Activated T-helper 2 cell treated with anti-CD3 and anti-CD28 coated beads, Interferon-gamma antibody, Interleukin-2, Interleukin-4, amounts not matched to agents 10 μg/mL and 5 μg/mL and 100 μg/mL, durations not matched to agents 14 hours and 24 hours and 36 hours (primary cell): ENCODE measurements at regions of chr11 and their contacts with region 1.

Region 1: GRCh38 chr11:10933455-10934292 is 75.8 kb upstream of the ZBED5 start:
- DNase-seq: peak; percentile 62
- H3K4me3 Mint-ChIP-seq: peak overlapping the region; percentile 76
- H3K27ac Mint-ChIP-seq: no peak overlapping the region
- H3K4me1 Mint-ChIP-seq: peaks cover 13% of the 10 kb centered on the region
- H3K27me3 Mint-ChIP-seq: peaks cover 50% of the 10 kb centered on the region

Region 2: GRCh38 chr11:10792398-10792975 is 141.2 kb before region 1 on chr11:
- intact Hi-C with region 1: loop called (anchors 2 kb)
- DNase-seq: peak; percentile 73
- H3K4me3 Mint-ChIP-seq: no peak overlapping the region
- H3K27ac Mint-ChIP-seq: no peak overlapping the region
- H3K4me1 Mint-ChIP-seq: peaks cover 11% of the 10 kb centered on the region
- H3K27me3 Mint-ChIP-seq: peaks cover 18% of the 10 kb centered on the region

Region 3: GRCh38 chr11:10878408-10879214 is 55.1 kb before region 1 on chr11:
- intact Hi-C with region 1: loop called (anchors 5 kb)
- DNase-seq: no peak
- H3K4me3 Mint-ChIP-seq: no peak overlapping the region
- H3K27ac Mint-ChIP-seq: no peak overlapping the region
- H3K4me1 Mint-ChIP-seq: peaks cover 5% of the 10 kb centered on the region
- H3K27me3 Mint-ChIP-seq: no peaks in the 10 kb centered on the region

Region 4: GRCh38 chr11:11265994-11266606 is 332.4 kb after region 1 on chr11:
- intact Hi-C with region 1: loop called (anchors 10 kb)
- DNase-seq: peak; percentile 46
- H3K4me3 Mint-ChIP-seq: no peak overlapping the region
- H3K27ac Mint-ChIP-seq: no peak overlapping the region
- H3K4me1 Mint-ChIP-seq: no peaks in the 10 kb centered on the region
- H3K27me3 Mint-ChIP-seq: no peaks in the 10 kb centered on the region

Region 5: GRCh38 chr11:11787305-11788062 is 853.8 kb after region 1 on chr11:
- intact Hi-C with region 1: loop called (anchors 2 kb)
- DNase-seq: peak; percentile 37
- H3K4me3 Mint-ChIP-seq: no peak overlapping the region
- H3K27ac Mint-ChIP-seq: no peak overlapping the region
- H3K4me1 Mint-ChIP-seq: no peaks in the 10 kb centered on the region
- H3K27me3 Mint-ChIP-seq: peaks cover 3% of the 10 kb centered on the region